ENCODE measurements at regions of chr9 and their contacts with region 1.

Region 1: DNA sequence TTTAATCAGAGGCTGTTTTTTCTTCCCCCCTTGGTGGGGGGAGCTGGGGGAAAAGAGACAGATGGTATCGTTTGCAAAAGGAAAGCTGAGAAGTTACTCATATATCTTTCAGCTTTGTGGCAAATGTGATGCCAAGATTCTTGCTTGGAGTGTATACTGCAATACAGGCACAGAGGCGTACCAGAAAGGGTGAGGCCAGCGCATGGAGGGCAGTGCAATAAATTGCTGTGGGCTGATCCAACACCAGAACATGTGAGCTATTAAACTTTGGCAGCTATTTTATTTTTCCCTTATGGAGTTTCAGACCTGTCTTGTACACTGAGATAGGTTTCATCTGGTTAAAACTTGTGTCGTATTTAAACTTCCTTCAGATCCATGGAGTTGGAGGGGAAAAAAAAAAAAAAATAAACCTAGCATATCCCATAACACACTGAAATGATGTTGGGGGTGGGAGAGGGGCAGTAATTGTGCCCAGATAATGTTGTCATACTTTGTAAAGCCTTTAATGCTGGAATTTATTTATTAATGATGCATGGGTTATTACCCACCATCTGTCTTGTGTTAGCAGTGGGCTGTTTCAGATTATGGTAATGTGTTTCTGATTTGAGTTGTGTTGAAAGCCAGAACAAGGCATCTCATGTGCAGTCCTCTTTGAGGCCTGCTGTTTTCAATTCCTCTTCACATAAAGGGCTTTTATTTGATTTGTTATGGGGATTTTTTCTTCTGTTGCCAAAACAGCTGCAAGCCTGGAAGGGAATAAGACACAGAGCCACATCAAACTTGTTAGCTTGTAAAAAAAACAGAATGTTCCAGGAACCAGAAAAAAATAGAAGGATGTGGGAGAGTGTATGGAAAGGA is 891.3 kb downstream of the TLE1 start:
- DNase-seq: peak; percentile 91
- H3K4me3 ChIP-seq: peak overlapping the region in 1 of 4 donors; percentile 6
- H3K27ac ChIP-seq: peak overlapping the region; percentile 69 to 80 (median 76)
- H3K4me1 ChIP-seq: peaks cover 0 to 38% (median 33%) of the 10 kb centered on the region in 4 donors
- H3K27me3 ChIP-seq: no peaks in the 10 kb centered on the region
- CTCF ChIP-seq: no peak
- EP300 ChIP-seq: peak; percentile 47 to 92 (median 76)
- POLR2A ChIP-seq: no peak

Region 2: DNA sequence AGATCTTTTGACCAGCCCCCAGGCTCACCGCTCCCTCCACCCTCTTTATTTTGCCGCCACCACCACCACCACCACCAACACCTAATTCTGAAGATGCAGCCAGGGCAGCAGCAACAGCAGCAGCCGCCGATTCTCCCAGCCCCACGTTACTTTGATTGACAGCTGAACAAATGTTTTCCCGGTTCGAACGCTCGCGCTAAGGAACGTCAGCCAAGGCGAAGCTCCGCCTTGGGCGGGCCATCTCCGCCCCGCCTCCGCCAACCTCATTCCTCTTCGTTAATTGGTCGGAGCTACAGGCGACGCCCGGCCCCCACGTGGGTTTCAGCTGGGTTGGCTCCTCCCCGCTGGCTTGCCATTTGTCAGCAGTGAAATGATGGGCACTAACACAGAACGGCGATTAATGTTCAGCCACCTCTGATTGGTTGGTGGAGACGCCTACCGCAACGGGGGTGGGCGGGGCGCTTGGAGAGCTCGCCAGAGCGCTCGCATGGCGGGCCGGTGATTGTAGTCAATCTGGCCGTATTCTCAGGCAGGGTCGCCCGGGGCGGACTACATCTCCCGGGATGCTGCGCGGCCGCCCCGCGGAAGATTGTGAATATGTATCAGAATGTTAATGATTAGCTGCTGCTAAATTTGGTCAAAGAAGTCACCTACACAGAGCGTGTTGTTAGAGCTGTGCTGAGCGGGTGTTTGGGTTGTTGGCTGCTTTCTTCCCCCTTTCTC is 1226.6 kb before region 1 on chr9 and contains the start of gene TLE4:
- intact Hi-C with region 1: loop called (anchors 5 kb)
- DNase-seq: peak; percentile 100
- H3K4me3 ChIP-seq: peak within 1 kb of the TSS; percentile 89 to 94 (median 94)
- H3K27ac ChIP-seq: peak within 1 kb of the TSS; percentile 93 to 97 (median 94)
- H3K4me1 ChIP-seq: peaks cover 0 to 34% (median 19%) of the 10 kb centered on the region in 4 donors
- H3K27me3 ChIP-seq: no peaks in the 10 kb centered on the region
- CTCF ChIP-seq: no peak
- EP300 ChIP-seq: peak in 1 of 4 donors; percentile 7
- POLR2A ChIP-seq: peak; percentile 88 to 90
- total RNA-seq, gene TLE4: 29.1 to 60.9 (median 34.6) TPM

Region 3: DNA sequence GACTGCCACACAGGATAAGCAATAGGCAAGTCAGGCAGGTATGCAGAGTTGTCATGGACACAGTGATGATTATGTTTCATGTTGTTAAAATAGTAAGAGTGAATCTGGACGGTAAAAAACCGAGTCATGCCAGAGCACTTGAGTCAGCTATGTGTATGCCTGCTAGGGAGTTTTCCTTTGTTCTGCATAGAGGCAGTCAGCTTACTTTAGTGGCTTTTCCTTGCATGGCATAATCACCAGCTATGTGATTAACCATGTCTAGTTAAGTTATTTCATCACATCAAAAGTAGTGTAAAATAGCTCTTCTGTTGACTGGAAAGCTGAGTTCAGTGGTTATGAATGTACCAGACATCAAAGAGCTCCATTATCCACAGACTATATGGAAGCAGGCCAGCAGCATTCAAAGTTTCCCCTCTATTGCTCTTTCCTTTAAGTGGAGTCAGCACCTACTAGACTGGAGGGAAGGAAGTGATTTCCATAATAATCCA is 98.5 kb before region 1 on chr9:
- intact Hi-C with region 1: loop called (anchors 5 kb)
- DNase-seq: no peak
- H3K4me3 ChIP-seq: no peak overlapping the region
- H3K27ac ChIP-seq: peak overlapping the region in 3 of 4 donors; percentile 33 to 73 (median 64)
- H3K4me1 ChIP-seq: peaks cover 0 to 40% (median 19%) of the 10 kb centered on the region in 4 donors
- H3K27me3 ChIP-seq: no peaks in the 10 kb centered on the region
- CTCF ChIP-seq: no peak
- EP300 ChIP-seq: no peak
- POLR2A ChIP-seq: no peak

Region 4: GRCh38 chr9:81609782-81610739 is 812.0 kb after region 1 on chr9:
- intact Hi-C with region 1: loop called (anchors 1 kb)
- DNase-seq: no peak
- H3K4me3 ChIP-seq: no peak overlapping the region
- H3K27ac ChIP-seq: peak overlapping the region; percentile 38 to 89 (median 82)
- H3K4me1 ChIP-seq: peaks cover 0 to 48% (median 39%) of the 10 kb centered on the region in 4 donors
- H3K27me3 ChIP-seq: no peaks in the 10 kb centered on the region
- CTCF ChIP-seq: no peak
- EP300 ChIP-seq: no peak
- POLR2A ChIP-seq: no peak

Region 5: GRCh38 chr9:81848472-81848871 is 1050.4 kb after region 1 on chr9:
- intact Hi-C with region 1: loop called (anchors 10 kb)
- DNase-seq: no peak
- H3K4me3 ChIP-seq: no peak overlapping the region
- H3K27ac ChIP-seq: no peak overlapping the region
- H3K4me1 ChIP-seq: peaks cover 0 to 15% (median 6%) of the 10 kb centered on the region in 4 donors
- H3K27me3 ChIP-seq: no peaks in the 10 kb centered on the region
- CTCF ChIP-seq: peak in 3 of 4 experiments; percentile 22 to 32 (median 29)
- EP300 ChIP-seq: no peak
- POLR2A ChIP-seq: no peak